Activated T-helper 2 cell treated with anti-CD3 and anti-CD28 coated beads, Interferon-gamma antibody, Interleukin-2, Interleukin-4, amounts not matched to agents 10 μg/mL and 5 μg/mL and 100 μg/mL, durations not matched to agents 14 hours and 24 hours and 36 hours (primary cell): ENCODE measurements at regions of chr2 and their contacts with region 1.

Region 1: GRCh38 chr2:224357098-224357901 is 44.6 kb downstream of the FAM124B start:
- DNase-seq: peak; percentile 32
- H3K4me3 Mint-ChIP-seq: no peak overlapping the region
- H3K27ac Mint-ChIP-seq: no peak overlapping the region
- H3K4me1 Mint-ChIP-seq: no peaks in the 10 kb centered on the region
- H3K27me3 Mint-ChIP-seq: peaks cover 10% of the 10 kb centered on the region

Region 2: GRCh38 chr2:224449212-224450147 is 92.2 kb after region 1 on chr2:
- intact Hi-C with region 1: loop called (anchors 2 kb)
- DNase-seq: no peak
- H3K4me3 Mint-ChIP-seq: no peak overlapping the region
- H3K27ac Mint-ChIP-seq: no peak overlapping the region
- H3K4me1 Mint-ChIP-seq: no peaks in the 10 kb centered on the region
- H3K27me3 Mint-ChIP-seq: peaks cover 23% of the 10 kb centered on the region

Region 3: DNA sequence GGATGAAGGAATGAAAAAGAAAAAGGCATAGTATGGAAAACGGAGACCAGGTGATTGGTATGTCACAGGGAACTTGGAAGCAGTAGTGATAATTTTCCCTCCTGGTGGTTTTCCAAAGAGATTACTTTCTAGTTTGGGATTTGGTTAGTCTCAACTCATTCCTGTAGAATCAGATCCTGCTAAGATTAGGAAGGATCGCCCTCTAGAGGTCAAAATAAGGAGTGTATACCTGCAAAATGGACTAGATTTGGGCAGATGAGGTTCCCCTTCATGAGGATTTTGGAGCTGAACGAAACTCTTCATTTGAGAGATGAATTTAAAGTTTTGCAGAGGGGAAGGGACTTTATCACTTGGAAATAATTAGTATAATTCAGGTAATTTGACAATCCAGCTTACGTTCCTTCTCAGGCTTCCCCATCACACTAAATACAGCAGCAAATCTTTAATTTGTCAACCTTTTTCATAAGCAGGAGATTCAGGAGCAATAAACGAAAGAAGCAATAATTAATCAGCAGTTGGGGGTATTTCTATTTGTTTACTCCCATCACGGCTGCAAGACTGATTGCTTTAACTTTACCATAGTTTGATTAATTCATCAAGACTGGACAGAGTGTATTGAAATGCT is 293.6 kb after region 1 on chr2:
- intact Hi-C with region 1: loop called (anchors 1 kb)
- DNase-seq: no peak
- H3K4me3 Mint-ChIP-seq: no peak overlapping the region
- H3K27ac Mint-ChIP-seq: no peak overlapping the region
- H3K4me1 Mint-ChIP-seq: peaks cover 4% of the 10 kb centered on the region
- H3K27me3 Mint-ChIP-seq: no peaks in the 10 kb centered on the region

Region 4: GRCh38 chr2:224778474-224778877 is 421.2 kb after region 1 on chr2:
- intact Hi-C with region 1: loop called (anchors 1 kb)
- DNase-seq: peak; percentile 39
- H3K4me3 Mint-ChIP-seq: no peak overlapping the region
- H3K27ac Mint-ChIP-seq: no peak overlapping the region
- H3K4me1 Mint-ChIP-seq: no peaks in the 10 kb centered on the region
- H3K27me3 Mint-ChIP-seq: no peaks in the 10 kb centered on the region

Region 5: DNA sequence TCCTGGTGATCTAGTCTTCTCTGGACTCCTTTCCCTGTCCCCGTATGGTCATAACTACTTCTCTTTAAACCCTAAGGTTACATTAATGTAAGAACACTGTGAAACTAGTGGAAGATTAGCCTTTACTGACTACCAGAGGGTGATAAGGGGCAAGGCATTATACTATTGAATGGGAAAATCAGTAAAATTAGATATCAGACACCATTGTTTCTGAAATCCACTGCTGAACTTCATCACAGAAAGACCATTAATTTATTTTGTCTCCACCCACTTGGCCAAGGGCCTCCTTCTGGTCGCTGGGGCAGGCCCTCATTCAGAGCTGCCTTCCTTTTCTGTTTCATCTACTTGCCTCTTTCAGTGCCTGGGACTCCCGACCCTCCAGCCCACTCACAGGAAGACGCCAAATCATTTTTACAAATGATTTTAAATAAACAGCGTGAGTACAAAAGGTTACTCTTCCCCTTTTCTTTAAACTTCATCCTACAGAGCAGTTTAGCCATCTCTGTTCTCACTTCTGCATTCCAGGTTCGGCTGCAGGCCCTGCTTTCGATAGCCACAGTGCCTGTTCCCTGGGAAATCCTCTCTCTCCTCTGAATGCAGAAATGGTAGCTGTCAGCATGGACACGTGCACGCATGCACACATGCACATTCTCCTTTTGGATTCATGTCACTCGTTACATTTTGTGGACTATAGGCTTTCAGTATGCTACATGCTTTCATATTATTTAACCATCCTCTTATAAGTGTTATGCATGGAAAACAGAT is 755.2 kb after region 1 on chr2:
- intact Hi-C with region 1: no loop called
- DNase-seq: no peak
- H3K4me3 Mint-ChIP-seq: no peak overlapping the region
- H3K27ac Mint-ChIP-seq: no peak overlapping the region
- H3K4me1 Mint-ChIP-seq: peaks cover 7% of the 10 kb centered on the region
- H3K27me3 Mint-ChIP-seq: peaks cover 13% of the 10 kb centered on the region